Naive thymus-derived CD8-positive, alpha-beta T cell (primary cell): ENCODE measurements at regions of chr14 and their contacts with region 1.

Region 1: DNA sequence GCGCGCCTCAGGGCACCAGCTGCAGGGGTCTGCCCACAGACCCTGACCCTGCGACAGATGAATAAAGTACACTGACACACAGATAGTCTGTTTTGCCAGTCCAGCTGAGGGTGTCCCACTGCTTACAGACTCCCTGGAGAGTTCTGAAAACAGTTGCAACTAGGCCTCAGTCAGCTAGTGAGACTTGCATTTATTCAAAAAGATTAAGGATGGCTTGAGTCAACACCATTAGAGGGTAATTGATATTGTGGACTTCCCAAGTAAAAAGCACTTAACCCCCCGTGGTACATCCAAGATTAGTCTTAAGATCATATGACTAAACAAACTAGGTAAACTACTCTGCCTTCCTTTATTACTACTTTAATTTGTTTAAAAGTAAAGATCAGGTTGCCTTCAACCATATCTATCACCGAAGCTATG is 11.1 kb upstream of the PSEN1 start:
- DNase-seq: no peak
- ATAC-seq: no peak
- H3K4me3 Mint-ChIP-seq: no peak overlapping the region
- H3K27ac Mint-ChIP-seq: peak overlapping the region in 6 of 10 donors; percentile 14 to 67 (median 42)
- H3K4me1 Mint-ChIP-seq: peaks cover 0 to 5% (median 1%) of the 10 kb centered on the region in 4 donors
- H3K27me3 Mint-ChIP-seq: no peaks in the 10 kb centered on the region

Region 2: DNA sequence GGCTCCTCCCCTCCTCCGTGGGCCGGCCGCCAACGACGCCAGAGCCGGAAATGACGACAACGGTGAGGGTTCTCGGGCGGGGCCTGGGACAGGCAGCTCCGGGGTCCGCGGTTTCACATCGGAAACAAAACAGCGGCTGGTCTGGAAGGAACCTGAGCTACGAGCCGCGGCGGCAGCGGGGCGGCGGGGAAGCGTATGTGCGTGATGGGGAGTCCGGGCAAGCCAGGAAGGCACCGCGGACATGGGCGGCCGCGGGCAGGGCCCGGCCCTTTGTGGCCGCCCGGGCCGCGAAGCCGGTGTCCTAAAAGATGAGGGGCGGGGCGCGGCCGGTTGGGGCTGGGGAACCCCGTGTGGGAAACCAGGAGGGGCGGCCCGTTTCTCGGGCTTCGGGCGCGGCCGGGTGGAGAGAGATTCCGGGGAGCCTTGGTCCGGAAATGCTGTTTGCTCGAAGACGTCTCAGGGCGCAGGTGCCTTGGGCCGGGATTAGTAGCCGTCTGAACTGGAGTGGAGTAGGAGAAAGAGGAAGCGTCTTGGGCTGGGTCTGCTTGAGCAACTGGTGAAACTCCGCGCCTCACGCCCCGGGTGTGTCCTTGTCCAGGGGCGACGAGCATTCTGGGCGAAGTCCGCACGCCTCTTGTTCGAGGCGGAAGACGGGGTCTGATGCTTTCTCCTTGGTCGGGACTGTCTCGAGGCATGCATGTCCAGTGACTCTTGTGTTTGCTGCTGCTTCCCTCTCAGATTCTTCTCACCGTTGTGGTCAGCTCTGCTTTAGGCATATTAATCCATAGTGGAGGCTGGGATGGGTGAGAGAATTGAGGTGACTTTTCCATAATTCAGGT is 11.4 kb after region 1 on chr14 and contains the start of gene PSEN1:
- POLR2A ChIA-PET with region 1: interaction called, 13 read pairs
- DNase-seq: peak; percentile 98 to 100 (median 99)
- ATAC-seq: peak; percentile 91
- H3K4me3 Mint-ChIP-seq: peak within 1 kb of the TSS; percentile 93 to 99 (median 98)
- H3K27ac Mint-ChIP-seq: peak within 1 kb of the TSS; percentile 94 to 100 (median 98)
- H3K4me1 Mint-ChIP-seq: peaks cover 19 to 35% (median 31%) of the 10 kb centered on the region in 4 donors
- H3K27me3 Mint-ChIP-seq: no peaks in the 10 kb centered on the region
- polyA plus RNA-seq, gene PSEN1: 14.7 to 26.1 (median 20.6) TPM